BJ (cell line): ENCODE measurements at regions of chr22 and their contacts with region 1.

Region 1: DNA sequence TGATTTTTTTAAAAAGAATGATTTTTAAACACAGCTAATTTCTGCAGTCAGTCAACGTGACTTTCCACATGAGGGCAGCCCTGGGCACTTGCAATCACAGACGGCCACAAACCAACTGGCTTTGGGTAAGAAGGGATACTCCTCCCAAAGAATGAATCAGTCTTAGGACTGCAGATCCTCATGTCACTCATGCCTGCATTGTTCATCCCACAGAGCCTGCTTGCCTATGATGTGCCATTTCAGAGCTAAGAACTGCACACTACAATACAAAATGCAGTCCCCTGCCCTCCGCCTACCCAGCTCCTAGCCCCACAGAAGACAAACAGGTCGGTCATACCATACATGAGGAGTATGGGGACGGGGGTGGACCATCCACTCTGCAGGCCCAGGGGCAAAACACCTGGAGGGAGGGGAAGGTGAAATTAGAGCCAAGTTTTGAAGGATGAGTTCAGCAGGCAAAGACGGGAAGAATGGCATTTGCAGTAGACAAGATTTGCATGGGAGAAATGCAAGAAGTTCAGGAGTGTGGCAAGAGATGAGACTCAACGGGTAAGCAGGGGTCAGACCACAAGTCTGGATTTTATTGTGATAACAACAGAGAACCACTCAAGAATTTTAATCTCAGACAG is 24.7 kb downstream of the PACSIN2 start:
- DNase-seq: no peak
- H3K4me3 ChIP-seq: no peak overlapping the region
- H3K27me3 ChIP-seq: no peaks in the 10 kb centered on the region
- CTCF ChIP-seq: peak; percentile 60

Region 2: GRCh38 chr22:43036282-43036829 is 46.1 kb after region 1 on chr22:
- CTCF ChIA-PET with region 1: interaction called, 12 read pairs
- POLR2A ChIA-PET with region 1: no interaction called
- DNase-seq: peak; percentile 78
- H3K4me3 ChIP-seq: no peak overlapping the region
- H3K27me3 ChIP-seq: no peaks in the 10 kb centered on the region
- CTCF ChIP-seq: no peak